ENCODE measurements at regions of chr20 and their contacts with region 1.

Region 1: DNA sequence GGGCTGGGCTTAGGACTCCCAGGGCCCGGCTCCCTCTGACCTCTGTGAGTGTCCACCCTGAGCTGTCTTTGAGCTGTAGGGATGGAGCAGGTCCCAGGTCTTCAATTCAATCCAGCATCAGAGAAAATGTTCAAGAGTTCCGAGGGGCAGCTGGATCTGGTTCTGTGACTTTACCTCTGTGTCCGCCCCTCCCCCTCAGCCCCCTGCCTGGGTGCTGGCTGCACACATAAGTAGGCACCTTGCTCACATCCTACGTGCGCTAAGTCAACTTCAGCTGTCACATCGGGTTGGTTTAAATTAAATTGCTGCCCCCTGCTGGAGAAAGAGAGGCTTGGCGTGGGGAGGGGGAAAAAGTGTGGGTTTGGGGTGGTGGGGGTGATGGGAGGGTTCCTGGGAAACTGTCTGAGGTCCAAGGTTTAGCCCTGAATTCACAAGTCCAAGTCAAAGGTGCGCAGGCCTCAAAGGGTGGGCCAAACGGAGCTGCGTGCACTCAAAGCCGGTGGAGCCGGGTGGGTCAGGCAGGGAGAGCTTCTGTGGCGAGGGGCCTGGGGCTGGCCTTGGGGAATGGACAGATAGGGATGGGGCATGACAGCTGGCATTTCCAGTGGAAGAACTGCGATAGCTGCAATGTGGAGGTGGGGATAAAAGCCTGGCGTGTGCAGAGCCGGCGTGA is 3.0 kb downstream of the WFDC5 start:
- DNase-seq: peak; percentile 59
- H3K4me3 ChIP-seq: no peak overlapping the region; a peak in 1 of 4 replicates
- H3K27ac ChIP-seq: no peak overlapping the region
- H3K4me1 ChIP-seq: no peaks in the 10 kb centered on the region
- H3K27me3 ChIP-seq: no peaks in the 10 kb centered on the region
- CTCF ChIP-seq: peak; percentile 71
- EP300 ChIP-seq: no peak
- RAD21 ChIP-seq: peak; percentile 33; the same call in 1 of the 2 replicates

Region 2: DNA sequence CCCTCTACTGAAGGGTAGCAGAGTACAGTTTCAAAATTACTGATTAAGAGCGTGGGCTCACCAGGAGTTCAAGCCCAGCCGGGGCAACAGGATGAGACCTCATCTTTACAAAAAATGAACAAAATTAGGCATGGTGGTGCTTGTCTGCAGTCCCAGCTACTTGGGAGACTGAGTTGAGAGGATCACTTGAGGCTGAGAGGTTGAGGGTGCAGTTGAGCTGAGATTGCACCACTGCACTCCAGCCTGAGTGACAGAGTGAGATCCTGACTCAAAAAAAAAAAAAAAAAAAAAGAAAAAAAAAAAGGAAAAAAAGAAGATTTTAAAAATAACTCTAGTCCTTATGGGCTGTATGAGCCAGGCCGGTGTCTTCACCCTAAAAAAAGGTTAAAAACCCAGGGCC is 183.3 kb before region 1 on chr20:
- CTCF ChIA-PET with region 1: no interaction called
- POLR2A ChIA-PET with region 1: no interaction called
- DNase-seq: no peak
- H3K4me3 ChIP-seq: no peak overlapping the region
- H3K27ac ChIP-seq: no peak overlapping the region
- H3K4me1 ChIP-seq: no peaks in the 10 kb centered on the region; a peak in 1 of 4 replicates
- H3K27me3 ChIP-seq: no peaks in the 10 kb centered on the region
- CTCF ChIP-seq: no peak
- EP300 ChIP-seq: no peak
- RAD21 ChIP-seq: no peak

Region 3: DNA sequence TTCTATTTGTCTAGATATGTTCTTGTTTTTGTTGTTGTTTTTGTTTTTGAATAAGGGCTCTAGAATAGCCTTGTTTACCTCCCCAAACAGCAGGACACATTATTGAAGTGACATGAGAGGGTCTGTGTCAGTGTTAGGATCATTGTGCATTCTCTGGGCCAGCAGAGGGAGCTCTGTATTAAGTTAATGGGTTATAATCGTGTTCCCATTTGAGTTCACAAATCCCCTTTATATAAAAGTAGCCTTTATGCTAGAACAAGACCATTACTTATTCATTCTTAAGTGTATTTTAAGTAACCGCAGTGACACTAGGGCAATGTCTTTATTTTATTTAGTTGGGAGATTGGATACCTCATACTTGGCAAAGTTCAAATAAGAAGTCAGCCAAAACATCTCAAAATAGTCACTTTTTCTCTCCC is 100.8 kb before region 1 on chr20:
- CTCF ChIA-PET with region 1: interaction called, 18 read pairs
- POLR2A ChIA-PET with region 1: no interaction called
- DNase-seq: peak; percentile 57
- H3K4me3 ChIP-seq: peak overlapping the region in 1 of 2 experiments; percentile 33; a peak in 1 of 4 replicates
- H3K27ac ChIP-seq: peak overlapping the region; percentile 51 to 96; a peak in 3 of 4 replicates
- H3K4me1 ChIP-seq: peaks cover 15 to 31% of the 10 kb centered on the region in 2 experiments
- H3K27me3 ChIP-seq: no peaks in the 10 kb centered on the region
- CTCF ChIP-seq: peak; percentile 96
- EP300 ChIP-seq: no peak
- RAD21 ChIP-seq: peak; percentile 82

Region 4: GRCh38 chr20:45077559-45077958 is 34.4 kb before region 1 on chr20:
- CTCF ChIA-PET with region 1: no interaction called
- POLR2A ChIA-PET with region 1: no interaction called
- DNase-seq: no peak
- H3K4me3 ChIP-seq: no peak overlapping the region
- H3K27ac ChIP-seq: no peak overlapping the region
- H3K4me1 ChIP-seq: no peaks in the 10 kb centered on the region
- H3K27me3 ChIP-seq: no peaks in the 10 kb centered on the region
- CTCF ChIP-seq: no peak
- EP300 ChIP-seq: no peak
- RAD21 ChIP-seq: no peak

Region 5: GRCh38 chr20:45128071-45128470 is 16.1 kb after region 1 on chr20:
- CTCF ChIA-PET with region 1: interaction called, 15 read pairs
- POLR2A ChIA-PET with region 1: no interaction called
- DNase-seq: no peak
- H3K4me3 ChIP-seq: no peak overlapping the region
- H3K27ac ChIP-seq: no peak overlapping the region
- H3K4me1 ChIP-seq: no peaks in the 10 kb centered on the region
- H3K27me3 ChIP-seq: peaks cover 13% of the 10 kb centered on the region; the same call in 1 of the 2 replicates
- CTCF ChIP-seq: no peak
- EP300 ChIP-seq: no peak
- RAD21 ChIP-seq: no peak

Region 6: DNA sequence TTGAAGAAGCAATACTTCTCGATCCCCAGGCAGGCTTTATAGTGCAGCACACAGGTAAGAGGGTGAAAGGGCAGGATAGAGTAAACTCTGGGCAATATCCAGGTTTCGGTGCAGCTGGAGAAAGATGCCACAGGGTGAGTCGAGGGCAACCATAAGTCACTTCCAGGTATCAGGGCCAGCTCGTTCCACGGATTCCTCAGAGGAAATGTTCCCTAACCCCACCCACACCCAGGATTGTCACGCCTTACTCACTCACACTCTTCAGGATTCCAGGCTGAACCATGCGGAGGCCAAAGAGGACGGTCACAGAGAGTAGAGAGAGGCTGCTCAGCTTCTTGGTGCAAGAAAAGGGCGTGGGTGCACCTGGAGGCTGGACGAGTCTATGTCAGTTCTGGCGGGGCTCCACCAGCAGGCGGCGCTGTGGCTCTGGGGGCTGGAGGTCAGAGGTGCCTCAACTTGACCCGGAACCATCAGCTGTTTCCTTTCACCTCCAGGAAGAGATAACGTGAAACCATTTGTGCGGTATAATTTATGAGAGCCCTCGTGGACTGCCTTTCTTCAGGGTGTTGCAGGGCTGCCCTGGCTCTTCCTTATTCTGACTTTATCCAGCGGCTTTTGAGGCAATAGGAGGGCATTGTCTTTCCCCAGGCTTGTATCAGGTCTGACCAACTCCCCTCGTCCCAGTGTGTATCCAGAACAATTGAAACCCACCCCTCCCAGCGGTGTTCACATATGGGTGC is 26.8 kb after region 1 on chr20:
- CTCF ChIA-PET with region 1: interaction called, 20 read pairs
- POLR2A ChIA-PET with region 1: no interaction called
- DNase-seq: peak; percentile 39
- H3K4me3 ChIP-seq: peak overlapping the region in 1 of 2 experiments; percentile 23; a peak in 1 of 4 replicates
- H3K27ac ChIP-seq: no peak overlapping the region
- H3K4me1 ChIP-seq: no peaks in the 10 kb centered on the region
- H3K27me3 ChIP-seq: peaks cover 18% of the 10 kb centered on the region; the same call in 1 of the 2 replicates
- CTCF ChIP-seq: peak; percentile 60
- EP300 ChIP-seq: no peak
- RAD21 ChIP-seq: peak; percentile 42

Region 7: GRCh38 chr20:45235995-45236394 is 124.1 kb after region 1 on chr20:
- CTCF ChIA-PET with region 1: no interaction called
- POLR2A ChIA-PET with region 1: no interaction called
- DNase-seq: no peak
- H3K4me3 ChIP-seq: no peak overlapping the region
- H3K27ac ChIP-seq: no peak overlapping the region
- H3K4me1 ChIP-seq: no peaks in the 10 kb centered on the region
- H3K27me3 ChIP-seq: peaks cover 3% of the 10 kb centered on the region; the same call in 1 of the 2 replicates
- CTCF ChIP-seq: peak; percentile 51; the same call in 1 of the 2 replicates
- EP300 ChIP-seq: no peak
- RAD21 ChIP-seq: no peak

Measured in SK-N-SH (cell line).